GM12878 (cell line): ENCODE measurements at regions of chr2 and their contacts with region 1.

Region 1: DNA sequence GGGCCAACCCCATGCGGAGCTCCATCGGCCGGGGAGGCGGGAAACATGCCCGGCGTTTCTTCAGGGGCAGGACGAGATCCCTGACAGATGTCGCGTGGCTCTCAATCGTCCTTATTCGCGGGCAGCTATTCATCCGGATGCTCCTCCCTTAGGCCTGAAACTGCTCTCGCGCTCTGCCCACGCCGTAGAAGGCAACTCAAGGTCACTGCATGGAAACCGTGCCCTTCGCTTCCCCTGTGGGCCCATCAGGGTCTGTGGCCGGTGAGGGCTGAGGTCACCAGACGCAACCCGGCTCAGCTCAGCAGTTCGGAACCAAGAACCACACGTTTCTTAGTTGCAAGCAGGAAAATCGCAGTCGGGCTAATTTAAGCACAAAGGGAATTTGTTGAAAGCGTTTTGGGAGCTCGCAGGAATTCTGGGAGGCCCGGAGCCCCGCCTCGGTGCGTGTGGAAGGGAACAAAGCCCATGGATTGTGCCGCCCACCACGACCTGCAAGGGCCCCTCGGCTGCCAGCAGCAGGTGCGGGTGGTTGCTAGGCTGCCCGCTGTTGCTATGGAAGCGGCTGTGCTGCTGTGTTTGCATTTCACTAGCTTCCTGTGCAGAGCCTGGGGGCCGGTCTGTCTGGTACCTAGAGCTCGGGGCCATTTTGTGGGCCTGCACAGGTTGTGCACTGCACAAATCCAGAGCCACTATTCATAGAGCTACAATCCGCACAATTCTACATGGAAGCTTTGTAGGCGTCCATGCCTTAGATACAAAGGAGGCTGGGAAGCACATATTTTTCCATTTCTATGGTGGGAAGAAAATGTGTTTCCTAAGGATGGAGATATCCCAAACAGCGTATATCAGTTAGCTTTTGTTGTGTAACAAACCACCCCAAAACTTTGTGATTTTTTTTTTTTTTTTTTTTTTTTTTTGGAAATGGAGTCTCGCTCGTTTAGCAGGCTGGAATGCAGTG is 6.0 kb upstream of the ALLC start:
- DNase-seq: peak; percentile 60
- ATAC-seq: peak; percentile 87
- H3K4me3 ChIP-seq: peak overlapping the region; percentile 26; the same call in 1 of the 2 replicates
- H3K27ac ChIP-seq: peak overlapping the region; percentile 59
- H3K4me1 ChIP-seq: peaks cover 15% of the 10 kb centered on the region
- H3K27me3 ChIP-seq: no peaks in the 10 kb centered on the region
- CTCF ChIP-seq: no peak
- EP300 ChIP-seq: peak in 1 of 2 experiments; percentile 22; a peak in 1 of 4 replicates
- POLR2A ChIP-seq: peak; percentile 46; the same call in 1 of the 2 replicates
- RAD21 ChIP-seq: no peak

Region 2: DNA sequence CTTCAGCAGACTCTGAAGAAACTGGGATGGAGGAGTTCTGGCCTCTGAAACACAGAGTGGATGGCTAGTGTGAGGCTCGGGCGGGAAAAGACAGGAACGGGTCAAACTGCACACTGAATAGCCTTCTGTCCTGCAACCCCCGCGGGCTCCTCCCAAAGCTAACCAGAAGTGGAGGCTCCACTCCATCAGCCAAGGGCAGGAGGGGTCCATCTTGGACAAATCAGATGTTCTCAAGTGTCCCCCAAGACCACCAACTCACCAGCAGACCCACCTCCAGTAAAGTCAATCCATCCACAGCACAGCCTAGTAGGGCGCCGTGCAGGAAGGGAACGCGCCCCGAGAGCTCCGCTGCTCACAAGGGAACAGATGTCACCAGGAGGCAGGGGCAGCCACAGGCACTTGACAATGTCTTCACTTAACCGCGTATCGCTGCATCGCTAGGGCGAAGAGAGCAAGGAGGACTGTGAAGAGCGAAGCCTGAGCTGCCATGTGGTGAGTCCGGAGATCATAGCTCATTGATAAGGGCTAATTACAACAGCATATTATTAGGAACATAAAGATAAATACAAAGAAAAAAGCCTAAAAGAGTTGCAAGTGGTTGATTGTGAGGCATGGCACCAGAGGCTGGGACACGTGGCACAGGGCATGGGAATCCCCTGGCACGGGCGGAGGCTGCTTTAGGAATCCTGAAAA is 826.3 kb before region 1 on chr2:
- CTCF ChIA-PET with region 1: no interaction called
- POLR2A ChIA-PET with region 1: no interaction called
- RAD21 ChIA-PET with region 1: no interaction called
- SMC1A ChIA-PET with region 1: no interaction called
- in situ Hi-C with region 1: no loop called
- intact Hi-C with region 1: no loop called
- DNase-seq: no peak
- ATAC-seq: no peak
- H3K4me3 ChIP-seq: no peak overlapping the region
- H3K27ac ChIP-seq: no peak overlapping the region
- H3K4me1 ChIP-seq: no peaks in the 10 kb centered on the region
- H3K27me3 ChIP-seq: no peaks in the 10 kb centered on the region; a peak in 1 of 4 replicates
- CTCF ChIP-seq: no peak
- EP300 ChIP-seq: no peak
- POLR2A ChIP-seq: no peak
- RAD21 ChIP-seq: no peak

Region 3: GRCh38 chr2:3303583-3304406 is 348.2 kb before region 1 on chr2:
- CTCF ChIA-PET with region 1: no interaction called
- POLR2A ChIA-PET with region 1: no interaction called
- RAD21 ChIA-PET with region 1: no interaction called
- SMC1A ChIA-PET with region 1: no interaction called
- in situ Hi-C with region 1: no loop called
- intact Hi-C with region 1: loop called (anchors 5 kb)
- DNase-seq: peak; percentile 7
- ATAC-seq: peak; percentile 100
- H3K4me3 ChIP-seq: no peak overlapping the region
- H3K27ac ChIP-seq: no peak overlapping the region
- H3K4me1 ChIP-seq: peaks cover 3% of the 10 kb centered on the region; the same call in 1 of the 2 replicates
- H3K27me3 ChIP-seq: no peaks in the 10 kb centered on the region
- CTCF ChIP-seq: peak; percentile 91 to 97 (median 92); a peak in 5 of 6 replicates
- EP300 ChIP-seq: no peak
- POLR2A ChIP-seq: no peak
- RAD21 ChIP-seq: peak; percentile 90

Region 4: DNA sequence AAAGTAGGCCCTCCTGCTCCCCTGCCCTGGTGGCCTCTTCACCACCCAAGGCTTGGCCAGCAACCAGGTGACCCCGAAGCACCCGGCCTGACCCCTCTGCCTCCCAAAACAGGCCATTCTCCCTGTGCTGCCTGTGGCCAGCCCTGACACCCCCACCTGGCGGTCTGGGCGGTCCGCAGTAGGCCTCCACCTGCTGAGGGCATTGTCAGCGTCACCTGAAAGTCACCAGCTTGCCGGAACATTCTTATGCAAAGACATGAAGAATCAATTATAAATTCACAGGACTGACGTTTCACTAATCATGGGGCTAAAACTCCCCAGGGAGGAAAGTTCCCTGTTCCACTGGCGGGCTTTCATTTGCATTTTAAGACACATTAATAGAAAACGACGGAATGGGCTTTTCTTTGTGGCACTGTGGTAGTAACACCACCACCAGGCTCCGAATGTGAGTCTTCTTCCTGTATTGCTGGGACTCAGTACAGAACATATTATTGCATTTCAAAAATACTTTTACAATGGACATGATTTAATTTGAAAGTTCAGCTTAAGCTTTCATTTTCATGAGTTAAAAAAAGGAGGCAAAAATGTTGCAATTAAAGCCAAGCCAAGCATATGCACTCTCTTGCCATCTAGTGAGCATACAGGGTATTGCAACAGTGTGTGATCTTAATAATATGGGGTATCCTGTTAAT is 190.0 kb before region 1 on chr2:
- CTCF ChIA-PET with region 1: interaction called, 10 read pairs
- POLR2A ChIA-PET with region 1: no interaction called
- RAD21 ChIA-PET with region 1: interaction called, 4 read pairs
- SMC1A ChIA-PET with region 1: interaction called, 10 read pairs
- in situ Hi-C with region 1: no loop called
- intact Hi-C with region 1: loop called (anchors 1 kb)
- DNase-seq: peak; percentile 68
- ATAC-seq: peak; percentile 85
- H3K4me3 ChIP-seq: peak overlapping the region; percentile 50; the same call in 1 of the 2 replicates
- H3K27ac ChIP-seq: peak overlapping the region; percentile 76
- H3K4me1 ChIP-seq: peaks cover 12% of the 10 kb centered on the region
- H3K27me3 ChIP-seq: no peaks in the 10 kb centered on the region
- CTCF ChIP-seq: peak; percentile 82 to 94 (median 89)
- EP300 ChIP-seq: no peak; a peak in 1 of 4 replicates
- POLR2A ChIP-seq: no peak
- RAD21 ChIP-seq: peak; percentile 91

Region 5: DNA sequence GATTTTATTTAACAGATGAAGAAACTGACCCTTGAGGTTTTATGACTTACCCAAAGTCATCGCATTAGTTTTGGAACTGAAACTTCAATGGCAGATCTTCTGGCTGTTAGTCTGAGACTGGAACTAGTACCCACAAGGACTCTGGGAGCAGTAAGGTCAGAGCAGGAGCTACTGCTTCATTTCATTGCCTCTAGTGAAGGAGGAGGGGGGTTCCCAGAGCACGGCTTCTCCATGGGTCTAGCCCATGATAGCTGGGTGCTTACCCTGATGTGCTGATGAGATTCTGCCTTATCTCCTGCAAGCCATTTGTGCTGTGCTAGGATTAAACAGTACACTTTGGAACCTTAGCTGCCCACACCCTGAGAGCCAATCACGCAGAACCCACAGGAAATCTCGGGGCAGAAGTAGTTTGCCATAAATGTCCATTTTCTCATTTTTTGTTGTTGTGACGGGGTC is 88.4 kb before region 1 on chr2:
- CTCF ChIA-PET with region 1: interaction called, 11 read pairs
- POLR2A ChIA-PET with region 1: interaction called, 11 read pairs
- RAD21 ChIA-PET with region 1: interaction called, 14 read pairs
- SMC1A ChIA-PET with region 1: interaction called, 8 read pairs
- in situ Hi-C with region 1: loop called (anchors 5 kb)
- intact Hi-C with region 1: loop called (anchors 1 kb)
- DNase-seq: peak; percentile 62
- ATAC-seq: peak; percentile 76
- H3K4me3 ChIP-seq: peak overlapping the region; percentile 41; the same call in 1 of the 2 replicates
- H3K27ac ChIP-seq: peak overlapping the region; percentile 82
- H3K4me1 ChIP-seq: peaks cover 25% of the 10 kb centered on the region
- H3K27me3 ChIP-seq: no peaks in the 10 kb centered on the region
- CTCF ChIP-seq: no peak
- EP300 ChIP-seq: no peak
- POLR2A ChIP-seq: peak; percentile 18; the same call in 1 of the 2 replicates
- RAD21 ChIP-seq: no peak

Region 6: DNA sequence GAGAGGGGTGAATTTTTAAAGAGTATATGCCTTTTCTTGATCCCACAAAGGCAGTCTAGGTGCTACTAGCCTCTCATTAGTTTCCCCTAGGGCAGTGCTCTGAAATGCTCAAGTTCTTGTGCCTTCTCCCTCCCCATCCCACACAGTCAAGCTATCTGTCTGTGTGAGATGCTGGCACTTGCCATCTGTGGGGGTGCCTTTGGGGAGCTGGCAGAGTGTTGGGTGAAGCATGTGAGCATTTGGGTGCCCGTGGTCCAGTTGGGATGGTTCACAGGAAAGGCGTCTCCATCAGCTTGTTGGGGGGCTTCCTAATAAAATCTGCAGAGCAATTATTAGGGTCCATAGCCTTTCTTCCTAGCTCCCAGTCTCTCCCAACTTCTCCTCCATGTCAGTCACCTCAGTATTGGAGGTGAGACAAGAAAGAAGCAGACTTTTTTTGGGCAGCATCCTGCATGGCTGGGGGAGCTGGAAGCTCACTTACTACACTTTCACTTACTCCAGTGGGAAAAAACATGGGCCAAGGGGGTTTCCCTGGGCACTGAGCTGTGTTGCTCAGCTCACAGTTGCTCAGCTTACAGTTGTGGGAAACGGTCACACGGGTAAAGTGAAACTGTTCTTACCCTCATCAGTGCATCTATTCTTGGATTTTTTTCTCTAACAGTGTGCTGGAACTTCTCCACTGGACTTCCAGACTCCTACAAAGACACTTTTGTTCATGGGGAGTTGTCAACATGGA is 27.7 kb before region 1 on chr2:
- CTCF ChIA-PET with region 1: interaction called, 7 read pairs
- POLR2A ChIA-PET with region 1: no interaction called
- RAD21 ChIA-PET with region 1: interaction called, 15 read pairs
- SMC1A ChIA-PET with region 1: interaction called, 8 read pairs
- in situ Hi-C with region 1: no loop called
- intact Hi-C with region 1: no loop called
- DNase-seq: peak; percentile 46
- ATAC-seq: peak; percentile 89
- H3K4me3 ChIP-seq: no peak overlapping the region; the same call in 1 of the 2 replicates
- H3K27ac ChIP-seq: peak overlapping the region; percentile 51
- H3K4me1 ChIP-seq: peaks cover 8% of the 10 kb centered on the region; the same call in 1 of the 2 replicates
- H3K27me3 ChIP-seq: no peaks in the 10 kb centered on the region
- CTCF ChIP-seq: no peak
- EP300 ChIP-seq: 0 out of 4 replicates have a peak, but pooled peaks have one; percentile 9 to 14
- POLR2A ChIP-seq: no peak
- RAD21 ChIP-seq: no peak

Region 7: GRCh38 chr2:4047961-4048891 is 396.3 kb after region 1 on chr2:
- CTCF ChIA-PET with region 1: no interaction called
- POLR2A ChIA-PET with region 1: no interaction called
- RAD21 ChIA-PET with region 1: no interaction called
- SMC1A ChIA-PET with region 1: no interaction called
- in situ Hi-C with region 1: no loop called
- intact Hi-C with region 1: no loop called
- DNase-seq: no peak
- ATAC-seq: peak; percentile 66
- H3K4me3 ChIP-seq: no peak overlapping the region
- H3K27ac ChIP-seq: no peak overlapping the region
- H3K4me1 ChIP-seq: no peaks in the 10 kb centered on the region
- H3K27me3 ChIP-seq: no peaks in the 10 kb centered on the region; a peak in 1 of 4 replicates
- CTCF ChIP-seq: no peak
- EP300 ChIP-seq: no peak
- POLR2A ChIP-seq: no peak
- RAD21 ChIP-seq: no peak